ENCODE measurements at regions of chr17 and their contacts with region 1.

Region 1: GRCh38 chr17:77451245-77451893 is 310.6 kb downstream of the SEC14L1 start:
- DNase-seq: peak; percentile 71
- H3K4me3 ChIP-seq: peak overlapping the region; percentile 70 to 81 (median 78)
- H3K27ac ChIP-seq: peak overlapping the region; percentile 48
- H3K4me1 ChIP-seq: peaks cover 28% of the 10 kb centered on the region
- H3K27me3 ChIP-seq: no peaks in the 10 kb centered on the region
- CTCF ChIP-seq: no peak
- POLR2A ChIP-seq: peak; percentile 35

Region 2: GRCh38 chr17:77420804-77421629 is 30.4 kb before region 1 on chr17:
- CTCF ChIA-PET with region 1: interaction called, 10 read pairs
- POLR2A ChIA-PET with region 1: no interaction called
- dilution Hi-C with region 1: no loop called
- intact Hi-C with region 1: no loop called
- DNase-seq: peak; percentile 42
- H3K4me3 ChIP-seq: no peak overlapping the region
- H3K27ac ChIP-seq: no peak overlapping the region
- H3K4me1 ChIP-seq: peaks cover 35% of the 10 kb centered on the region
- H3K27me3 ChIP-seq: no peaks in the 10 kb centered on the region
- CTCF ChIP-seq: no peak
- POLR2A ChIP-seq: no peak

Region 3: GRCh38 chr17:77485089-77485833 is 33.9 kb after region 1 on chr17:
- CTCF ChIA-PET with region 1: no interaction called
- POLR2A ChIA-PET with region 1: no interaction called
- dilution Hi-C with region 1: no loop called
- intact Hi-C with region 1: no loop called
- DNase-seq: no peak
- H3K4me3 ChIP-seq: no peak overlapping the region
- H3K27ac ChIP-seq: no peak overlapping the region
- H3K4me1 ChIP-seq: no peaks in the 10 kb centered on the region
- H3K27me3 ChIP-seq: no peaks in the 10 kb centered on the region
- CTCF ChIP-seq: no peak
- POLR2A ChIP-seq: no peak

Measured in endothelial cell of umbilical vein (primary cell).